CD8-positive, alpha-beta T cell (primary cell): ENCODE measurements at regions of chr10 and their contacts with region 1.

Region 1: DNA sequence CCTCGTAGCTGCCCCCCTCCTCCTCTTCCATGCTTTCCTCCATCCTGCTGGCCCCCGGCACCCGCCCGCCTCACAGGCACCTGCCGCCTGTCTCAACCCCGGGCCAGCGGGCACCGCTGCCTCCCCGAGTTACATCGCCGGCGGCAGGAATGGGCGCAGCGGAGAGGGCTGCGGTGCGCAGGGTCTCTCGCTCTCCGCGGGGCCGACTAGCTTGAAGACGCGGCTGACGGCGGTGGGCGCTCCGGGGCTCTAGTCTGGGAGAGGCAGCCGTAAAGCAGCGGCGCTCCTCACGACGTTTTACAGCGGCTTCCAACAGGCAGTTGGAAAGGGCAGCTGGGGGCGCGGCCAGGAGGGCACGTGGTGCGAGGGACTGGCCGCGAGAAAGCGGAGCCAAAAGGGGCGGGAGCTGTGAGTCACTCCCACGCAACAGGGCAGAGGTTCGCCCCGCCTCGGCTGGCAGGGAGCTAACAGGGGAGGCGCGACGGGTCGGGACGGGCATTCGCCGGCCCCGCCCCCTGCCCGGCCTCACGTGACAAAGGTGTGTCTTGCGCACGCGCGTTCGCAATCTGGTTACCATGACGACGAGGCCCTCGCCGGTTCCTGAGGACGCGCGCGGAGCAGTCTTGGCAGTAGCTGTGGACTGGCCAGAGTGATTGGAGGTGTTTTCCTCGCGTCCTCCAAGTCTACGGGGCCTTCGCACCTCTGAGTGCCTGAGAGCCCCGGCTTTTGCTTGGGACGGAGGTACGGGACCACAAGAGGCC is at the start of gene CACUL1:
- DNase-seq: peak; percentile 99 to 100 (median 100)
- ATAC-seq: peak; percentile 97
- H3K4me3 ChIP-seq: peak within 1 kb of the TSS; percentile 86 to 92
- H3K4me3 Mint-ChIP-seq: peak within 1 kb of the TSS; percentile 93
- H3K27ac ChIP-seq: peak within 1 kb of the TSS; percentile 79 to 83
- H3K27ac Mint-ChIP-seq: peak within 1 kb of the TSS; percentile 92
- H3K4me1 ChIP-seq: peaks cover 29% of the 10 kb centered on the region
- H3K4me1 Mint-ChIP-seq: peaks cover 36% of the 10 kb centered on the region
- H3K27me3 ChIP-seq: peaks cover 0 to 2% of the 10 kb centered on the region in 2 experiments
- H3K27me3 Mint-ChIP-seq: no peaks in the 10 kb centered on the region
- CTCF ChIP-seq: no peak
- total RNA-seq, gene CACUL1: 40.8 to 46.8 TPM

Region 2: DNA sequence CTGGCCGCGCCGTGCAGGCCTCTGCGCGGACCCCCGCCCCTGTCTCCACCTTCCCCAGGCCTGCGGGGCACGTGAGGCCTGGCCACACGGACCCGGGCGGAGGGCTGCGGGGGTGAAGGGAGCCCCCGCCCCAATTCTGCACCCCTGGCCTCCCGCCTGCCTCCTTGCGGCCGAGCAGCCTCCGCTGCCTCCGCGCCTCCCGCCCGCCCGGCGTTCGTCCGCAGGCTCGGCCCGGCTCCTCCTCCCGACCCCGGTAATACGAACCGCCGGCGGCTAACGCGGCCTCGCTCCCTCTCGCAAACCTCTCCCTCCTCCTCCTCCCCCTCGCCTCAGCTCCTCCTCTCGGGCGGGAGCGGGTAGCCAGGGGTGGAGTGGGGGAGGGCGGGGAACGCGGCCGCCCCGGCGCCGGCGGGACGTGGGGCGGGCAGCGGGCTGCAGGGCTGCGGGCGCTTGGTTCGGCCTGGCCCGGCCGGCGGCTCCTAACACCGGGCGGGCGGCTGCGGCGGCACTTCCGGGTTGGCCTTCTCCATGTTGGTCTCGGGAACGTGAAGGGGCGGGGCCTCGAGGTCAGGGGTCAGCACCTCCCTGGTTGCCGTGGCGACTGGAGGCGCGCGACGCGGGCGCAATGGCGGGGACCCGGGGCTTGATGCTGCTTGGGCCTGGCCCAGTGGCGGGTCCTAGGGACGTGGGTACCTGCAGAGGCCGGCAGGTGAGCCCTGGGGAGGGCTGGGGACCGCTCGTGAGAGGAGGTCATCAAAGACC is 708.3 kb before region 1 on chr10 and contains the start of gene RAB11FIP2:
- CTCF ChIA-PET with region 1: no interaction called
- POLR2A ChIA-PET with region 1: no interaction called
- intact Hi-C with region 1: loop called in 1 of 2 experiments (anchors 5 kb)
- DNase-seq: peak; percentile 93 to 98 (median 96)
- ATAC-seq: peak; percentile 94
- H3K4me3 ChIP-seq: peak within 1 kb of the TSS; percentile 54 to 75
- H3K4me3 Mint-ChIP-seq: peak within 1 kb of the TSS; percentile 89
- H3K27ac ChIP-seq: peak within 1 kb of the TSS; percentile 44 to 70
- H3K27ac Mint-ChIP-seq: peak within 1 kb of the TSS; percentile 89
- H3K4me1 ChIP-seq: peaks cover 18% of the 10 kb centered on the region
- H3K4me1 Mint-ChIP-seq: peaks cover 45% of the 10 kb centered on the region
- H3K27me3 ChIP-seq: no peaks in the 10 kb centered on the region
- H3K27me3 Mint-ChIP-seq: no peaks in the 10 kb centered on the region
- CTCF ChIP-seq: no peak
- total RNA-seq, gene RAB11FIP2: 32.6 to 34.2 TPM

Region 3: GRCh38 chr10:118209215-118209614 is 545.7 kb before region 1 on chr10:
- CTCF ChIA-PET with region 1: no interaction called
- POLR2A ChIA-PET with region 1: no interaction called
- intact Hi-C with region 1: no loop called
- DNase-seq: no peak
- ATAC-seq: no peak
- H3K4me3 ChIP-seq: no peak overlapping the region
- H3K4me3 Mint-ChIP-seq: no peak overlapping the region
- H3K27ac ChIP-seq: no peak overlapping the region
- H3K27ac Mint-ChIP-seq: no peak overlapping the region
- H3K4me1 ChIP-seq: no peaks in the 10 kb centered on the region
- H3K4me1 Mint-ChIP-seq: no peaks in the 10 kb centered on the region
- H3K27me3 ChIP-seq: peaks cover 0 to 3% of the 10 kb centered on the region in 2 experiments
- H3K27me3 Mint-ChIP-seq: peaks cover 25% of the 10 kb centered on the region
- CTCF ChIP-seq: no peak

Region 4: GRCh38 chr10:118698421-118698820 is 56.5 kb before region 1 on chr10:
- CTCF ChIA-PET with region 1: interaction called, 4 read pairs
- POLR2A ChIA-PET with region 1: interaction called, 10 read pairs
- intact Hi-C with region 1: loop called (anchors 1 to 2 kb)
- DNase-seq: peak; percentile 59 to 92 (median 82)
- ATAC-seq: peak; percentile 100
- H3K4me3 ChIP-seq: peak overlapping the region; percentile 10 to 11
- H3K4me3 Mint-ChIP-seq: peak overlapping the region; percentile 75
- H3K27ac ChIP-seq: peak overlapping the region; percentile 18 to 40
- H3K27ac Mint-ChIP-seq: peak overlapping the region; percentile 91
- H3K4me1 ChIP-seq: peaks cover 57% of the 10 kb centered on the region
- H3K4me1 Mint-ChIP-seq: peaks cover 73% of the 10 kb centered on the region
- H3K27me3 ChIP-seq: no peaks in the 10 kb centered on the region
- H3K27me3 Mint-ChIP-seq: no peaks in the 10 kb centered on the region
- CTCF ChIP-seq: no peak

Region 5: GRCh38 chr10:119103903-119104652 is 349.2 kb after region 1 on chr10 and contains the start of gene DENND10:
- CTCF ChIA-PET with region 1: no interaction called
- POLR2A ChIA-PET with region 1: no interaction called
- intact Hi-C with region 1: loop called in 1 of 2 experiments (anchors 10 kb)
- DNase-seq: peak; percentile 55 to 88 (median 78)
- ATAC-seq: peak; percentile 85
- H3K4me3 ChIP-seq: peak within 1 kb of the TSS; percentile 46 to 49
- H3K4me3 Mint-ChIP-seq: peak within 1 kb of the TSS; percentile 90
- H3K27ac ChIP-seq: peak within 1 kb of the TSS; percentile 37 to 59
- H3K27ac Mint-ChIP-seq: peak within 1 kb of the TSS; percentile 93
- H3K4me1 ChIP-seq: peaks cover 4% of the 10 kb centered on the region
- H3K4me1 Mint-ChIP-seq: peaks cover 20% of the 10 kb centered on the region
- H3K27me3 ChIP-seq: no peaks in the 10 kb centered on the region
- H3K27me3 Mint-ChIP-seq: no peaks in the 10 kb centered on the region
- CTCF ChIP-seq: no peak
- total RNA-seq, gene DENND10: 28.8 to 30.5 TPM

Region 6: DNA sequence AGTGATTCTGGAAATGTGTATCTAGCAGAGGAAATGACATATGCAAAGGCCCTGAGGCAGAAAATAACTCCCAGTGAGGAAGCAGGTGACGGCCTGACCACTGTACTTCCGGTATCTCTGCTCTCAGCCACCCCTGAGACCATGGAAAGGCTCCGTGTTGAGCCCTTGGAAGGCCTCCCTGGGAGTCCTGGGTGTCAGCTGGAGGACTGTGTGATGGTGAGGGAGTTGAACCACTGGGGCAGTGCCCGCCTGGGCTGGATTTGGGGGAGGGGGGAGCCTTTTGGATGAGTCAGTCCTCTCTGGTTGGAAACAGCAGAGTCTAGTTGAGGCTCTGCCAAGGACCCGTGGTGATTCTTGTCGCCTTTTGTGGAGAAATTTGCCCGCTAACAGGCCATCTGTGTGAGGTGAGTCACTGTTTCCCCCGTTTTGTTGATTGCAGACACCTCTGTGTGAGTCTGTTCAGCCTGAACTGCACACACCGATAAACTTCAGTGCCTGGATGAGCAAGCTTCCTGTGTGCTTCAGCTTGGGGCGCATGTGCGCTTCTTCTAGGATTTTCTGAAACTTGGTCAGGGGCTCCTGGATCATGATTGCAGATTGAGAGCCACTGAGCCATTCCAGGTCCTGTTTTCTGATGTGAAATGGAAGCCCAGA is 551.1 kb after region 1 on chr10:
- CTCF ChIA-PET with region 1: no interaction called
- POLR2A ChIA-PET with region 1: no interaction called
- intact Hi-C with region 1: loop called in 1 of 2 experiments (anchors 10 kb)
- DNase-seq: peak; percentile 49 to 94 (median 86)
- ATAC-seq: peak; percentile 79
- H3K4me3 ChIP-seq: peak overlapping the region; percentile 50 to 57
- H3K4me3 Mint-ChIP-seq: peak overlapping the region; percentile 89
- H3K27ac ChIP-seq: peak overlapping the region; percentile 63 to 90
- H3K27ac Mint-ChIP-seq: peak overlapping the region; percentile 97
- H3K4me1 ChIP-seq: peaks cover 57% of the 10 kb centered on the region
- H3K4me1 Mint-ChIP-seq: peaks cover 67% of the 10 kb centered on the region
- H3K27me3 ChIP-seq: peaks cover 0 to 3% of the 10 kb centered on the region in 2 experiments
- H3K27me3 Mint-ChIP-seq: no peaks in the 10 kb centered on the region
- CTCF ChIP-seq: no peak

Region 7: GRCh38 chr10:119526621-119527592 is 772.0 kb after region 1 on chr10:
- CTCF ChIA-PET with region 1: no interaction called
- POLR2A ChIA-PET with region 1: no interaction called
- intact Hi-C with region 1: no loop called
- DNase-seq: peak in 3 of 9 experiments; percentile 34 to 76 (median 50)
- ATAC-seq: peak; percentile 87
- H3K4me3 ChIP-seq: no peak overlapping the region
- H3K4me3 Mint-ChIP-seq: no peak overlapping the region
- H3K27ac ChIP-seq: peak overlapping the region in 1 of 2 experiments; percentile 12
- H3K27ac Mint-ChIP-seq: peak overlapping the region; percentile 89
- H3K4me1 ChIP-seq: peaks cover 62% of the 10 kb centered on the region
- H3K4me1 Mint-ChIP-seq: peaks cover 72% of the 10 kb centered on the region
- H3K27me3 ChIP-seq: no peaks in the 10 kb centered on the region
- H3K27me3 Mint-ChIP-seq: no peaks in the 10 kb centered on the region
- CTCF ChIP-seq: no peak

Region 8: GRCh38 chr10:119892188-119893065 is 1137.5 kb after region 1 on chr10 and contains the start of gene SEC23IP:
- CTCF ChIA-PET with region 1: no interaction called
- POLR2A ChIA-PET with region 1: no interaction called
- intact Hi-C with region 1: loop called in 1 of 2 experiments (anchors 5 kb)
- DNase-seq: peak; percentile 78 to 95 (median 89)
- ATAC-seq: peak; percentile 98
- H3K4me3 ChIP-seq: peak within 1 kb of the TSS; percentile 97 to 98
- H3K4me3 Mint-ChIP-seq: peak within 1 kb of the TSS; percentile 98
- H3K27ac ChIP-seq: peak within 1 kb of the TSS; percentile 84 to 96
- H3K27ac Mint-ChIP-seq: peak within 1 kb of the TSS; percentile 99
- H3K4me1 ChIP-seq: peaks cover 10% of the 10 kb centered on the region
- H3K4me1 Mint-ChIP-seq: peaks cover 46% of the 10 kb centered on the region
- H3K27me3 ChIP-seq: no peaks in the 10 kb centered on the region
- H3K27me3 Mint-ChIP-seq: no peaks in the 10 kb centered on the region
- CTCF ChIP-seq: no peak
- total RNA-seq, gene SEC23IP: 16.2 to 19.8 TPM